ENCODE measurements at regions of chr19 and their contacts with region 1.

Region 1: DNA sequence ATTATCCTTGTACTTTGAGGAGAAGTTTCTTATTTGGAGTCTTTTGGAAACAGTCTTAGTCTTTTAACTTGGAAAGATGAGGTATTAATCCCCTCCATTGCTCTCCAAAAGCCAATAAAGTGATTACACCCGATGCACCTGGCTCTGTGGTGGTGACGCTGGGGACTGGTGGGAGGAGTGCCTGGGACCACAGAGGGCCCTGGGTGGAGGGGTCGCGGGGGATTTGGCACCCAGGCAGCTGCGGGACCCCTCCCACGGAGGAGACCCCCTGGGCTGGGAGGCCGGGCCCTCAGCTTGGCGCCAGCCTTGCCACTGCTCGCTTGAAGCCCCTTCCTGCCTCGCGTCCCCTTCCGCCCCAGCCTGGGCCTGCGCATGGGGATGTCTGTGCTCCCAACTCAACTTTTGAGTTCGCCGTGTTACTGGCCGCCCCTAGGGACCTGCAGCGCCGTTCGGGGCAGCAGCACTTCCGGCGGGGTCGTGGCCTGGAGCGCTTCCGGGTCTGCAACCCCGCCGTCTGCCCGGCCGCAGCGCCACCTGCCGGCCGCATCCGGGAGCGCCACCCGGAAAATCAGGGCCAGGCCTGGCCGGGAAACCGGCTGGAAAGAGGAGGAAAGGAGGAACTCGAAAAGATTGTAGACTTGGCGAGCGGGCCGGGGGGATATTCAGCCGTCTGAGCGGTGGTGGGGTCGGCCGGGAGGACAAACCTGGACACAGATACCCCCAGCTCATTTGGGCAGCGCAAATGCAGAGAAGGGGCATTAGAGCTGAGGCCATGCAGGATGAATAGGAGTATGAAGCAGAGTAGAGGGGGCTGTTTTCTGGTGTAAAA is 8.4 kb downstream of the PEAK3 start:
- DNase-seq: no peak
- H3K4me3 ChIP-seq: peak overlapping the region in 3 of 4 donors; percentile 15 to 96 (median 29)
- H3K27ac ChIP-seq: peak overlapping the region; percentile 48 to 100 (median 88)
- H3K4me1 ChIP-seq: peaks cover 50 to 65% (median 51%) of the 10 kb centered on the region in 3 donors
- H3K27me3 ChIP-seq: no peaks in the 10 kb centered on the region
- CTCF ChIP-seq: peak; percentile 97 to 99 (median 98)
- POLR2A ChIP-seq: peak in 1 of 4 donors; percentile 47

Region 2: DNA sequence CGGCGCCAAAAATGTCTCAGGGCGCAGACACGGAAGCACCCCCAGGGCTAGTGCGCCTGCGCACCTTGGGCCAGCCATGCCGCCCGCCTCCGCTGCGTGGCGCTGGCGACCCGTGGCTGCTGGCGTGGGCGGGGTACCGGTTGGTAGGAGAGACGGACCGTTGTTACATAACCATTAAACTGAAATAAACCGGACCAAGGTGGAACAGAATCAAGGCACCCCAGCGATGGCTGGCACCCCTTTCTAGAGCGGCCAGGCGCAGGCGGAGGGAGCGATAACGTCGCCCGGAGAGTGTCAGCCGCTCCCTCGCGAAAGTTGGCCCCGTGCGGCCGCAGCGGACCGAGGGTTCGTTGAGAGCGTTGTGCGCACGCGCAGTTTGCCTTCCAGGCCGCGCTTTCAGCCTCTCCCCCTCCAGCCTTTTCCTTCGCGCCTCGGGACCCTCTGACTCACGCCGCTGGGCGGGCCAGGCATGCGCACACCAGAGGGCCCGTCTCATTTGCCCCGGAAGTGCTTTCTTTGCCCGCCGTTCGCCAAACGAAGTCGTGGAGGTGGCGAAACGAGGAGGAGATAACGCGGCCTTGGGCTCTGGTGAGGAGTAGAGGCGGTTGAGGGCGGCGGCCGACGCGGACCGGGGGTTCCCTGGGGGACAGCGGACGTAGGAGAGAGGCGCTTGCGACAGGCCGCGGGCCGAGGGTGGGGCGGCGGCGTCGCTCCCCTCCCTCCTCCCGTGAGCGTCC is 37.1 kb before region 1 on chr19 and contains the starts of genes PLEKHJ1 and SF3A2:
- intact Hi-C with region 1: loop called (anchors 2 kb)
- DNase-seq: peak; percentile 73
- H3K4me3 ChIP-seq: peak within 1 kb of the TSS; percentile 79 to 97 (median 86)
- H3K27ac ChIP-seq: peak within 1 kb of the TSS; percentile 96 to 99 (median 98)
- H3K4me1 ChIP-seq: peaks cover 34 to 86% (median 55%) of the 10 kb centered on the region in 3 donors
- H3K27me3 ChIP-seq: no peaks in the 10 kb centered on the region
- CTCF ChIP-seq: peak; percentile 96 to 100 (median 100)
- POLR2A ChIP-seq: peak in 3 of 4 donors; percentile 61 to 81 (median 75)
- total RNA-seq, gene PLEKHJ1: 44.8 to 56.5 (median 48.8) TPM
- total RNA-seq, gene SF3A2: 19.3 to 39.7 (median 31.3) TPM

Region 3: DNA sequence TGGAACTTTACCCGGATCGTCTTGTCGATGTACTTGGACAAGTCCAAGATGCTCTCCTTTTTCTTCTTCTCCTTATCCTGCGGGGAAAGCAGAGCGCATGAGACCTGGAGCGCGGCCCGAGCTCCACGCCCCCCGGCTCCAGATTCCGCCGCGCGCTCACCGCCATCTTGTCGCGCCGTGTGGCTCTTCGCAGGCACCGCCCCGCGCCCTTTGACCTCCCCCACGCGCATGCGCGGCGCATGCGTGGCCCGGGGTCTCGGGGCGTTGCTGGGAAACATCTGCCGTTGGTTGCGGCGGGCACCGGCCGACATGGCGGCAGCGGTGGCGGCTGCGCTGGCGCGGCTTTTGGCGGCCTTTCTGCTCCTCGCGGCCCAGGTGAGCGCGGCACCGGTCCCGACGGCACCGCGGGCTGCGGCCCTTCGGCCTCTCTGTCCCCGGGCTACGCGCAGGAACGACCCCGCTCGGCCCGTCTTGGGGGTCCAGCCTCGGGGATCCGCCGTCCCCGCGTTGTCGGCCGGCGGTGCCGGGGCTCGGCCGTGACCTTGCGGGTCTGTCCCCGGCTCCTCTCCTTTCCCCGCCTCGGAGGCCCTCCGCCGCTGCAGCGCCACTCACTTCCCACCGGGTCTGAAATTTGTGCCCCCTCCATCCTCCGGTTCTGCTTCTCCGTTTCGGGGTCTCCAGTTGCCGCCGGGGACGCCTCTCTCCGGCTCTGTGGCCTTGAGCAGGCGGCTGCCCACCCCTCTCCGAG is 55.0 kb after region 1 on chr19 and contains the starts of genes LSM7 and SPPL2B:
- intact Hi-C with region 1: loop called (anchors 5 kb)
- DNase-seq: peak; percentile 37
- H3K4me3 ChIP-seq: peak within 1 kb of the TSS; percentile 77 to 98 (median 88)
- H3K27ac ChIP-seq: peak within 1 kb of the TSS; percentile 82 to 91 (median 83)
- H3K4me1 ChIP-seq: peaks cover 27 to 75% (median 44%) of the 10 kb centered on the region in 3 donors
- H3K27me3 ChIP-seq: no peaks in the 10 kb centered on the region
- CTCF ChIP-seq: peak in 1 of 6 experiments; percentile 28
- POLR2A ChIP-seq: peak in 3 of 4 donors; percentile 36 to 71 (median 61)
- total RNA-seq, gene LSM7: 97.8 to 163 (median 128) TPM
- total RNA-seq, gene SPPL2B: 14.7 to 37.7 (median 36.2) TPM

Measured in esophagus squamous epithelium (tissue), 5 donors.